Lower lobe of right lung (tissue), 2 donors: ENCODE measurements at regions of chr3 and their contacts with region 1.

Region 1: GRCh38 chr3:114389156-114389555 is 95.3 kb downstream of the TIGIT start:
- DNase-seq: no peak
- ATAC-seq: no peak
- H3K4me3 ChIP-seq: no peak overlapping the region
- H3K27ac ChIP-seq: no peak overlapping the region
- H3K4me1 ChIP-seq: peaks cover 10% of the 10 kb centered on the region
- H3K27me3 ChIP-seq: no peaks in the 10 kb centered on the region
- CTCF ChIP-seq: no peak

Region 2: GRCh38 chr3:113783980-113784379 is 605.2 kb before region 1 on chr3:
- intact Hi-C with region 1: no loop called
- DNase-seq: no peak
- ATAC-seq: no peak
- H3K4me3 ChIP-seq: no peak overlapping the region
- H3K27ac ChIP-seq: peak overlapping the region; percentile 2
- H3K4me1 ChIP-seq: peaks cover 18% of the 10 kb centered on the region
- H3K27me3 ChIP-seq: no peaks in the 10 kb centered on the region
- CTCF ChIP-seq: no peak

Region 3: DNA sequence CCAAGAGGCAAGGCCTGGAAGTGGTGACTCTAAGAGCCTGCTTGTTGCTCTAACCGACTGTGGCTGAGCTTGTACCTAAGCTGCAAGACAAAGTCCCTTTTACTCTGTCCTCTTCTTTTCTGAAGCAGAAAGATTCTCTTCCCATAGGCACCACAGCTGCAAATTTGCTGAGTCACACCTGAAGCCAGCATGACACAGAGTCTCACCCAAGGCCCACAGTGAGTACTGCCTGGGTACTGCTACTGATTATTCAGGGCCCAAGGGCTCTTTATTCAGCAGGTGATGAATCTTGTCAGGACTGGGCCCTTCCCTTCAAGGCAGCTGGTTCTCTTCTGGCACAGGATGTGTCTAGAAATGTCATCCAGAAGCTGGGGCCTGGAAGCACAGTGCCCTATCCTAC is 114.2 kb before region 1 on chr3:
- intact Hi-C with region 1: no loop called
- DNase-seq: no peak
- ATAC-seq: no peak
- H3K4me3 ChIP-seq: no peak overlapping the region
- H3K27ac ChIP-seq: no peak overlapping the region
- H3K4me1 ChIP-seq: no peaks in the 10 kb centered on the region
- H3K27me3 ChIP-seq: no peaks in the 10 kb centered on the region
- CTCF ChIP-seq: no peak

Region 4: DNA sequence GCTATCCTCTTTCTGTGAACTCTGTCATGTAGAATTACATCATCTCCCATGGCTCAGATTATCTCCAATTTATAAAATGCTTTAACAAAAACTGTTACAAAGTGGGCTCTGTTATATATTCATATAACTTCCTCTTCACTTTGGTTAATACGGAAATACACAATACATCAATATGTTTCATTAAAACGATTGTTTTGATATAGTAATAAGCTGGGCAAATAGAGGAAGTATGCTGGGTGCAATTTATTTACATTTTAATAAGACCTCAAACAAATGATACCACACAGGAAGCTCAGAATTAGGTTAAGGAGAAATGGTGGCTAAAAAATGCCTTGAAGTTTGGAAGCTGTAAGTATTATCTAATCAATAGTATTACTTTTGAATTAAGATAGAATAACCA is 426.9 kb after region 1 on chr3:
- intact Hi-C with region 1: loop called (anchors 5 kb)
- DNase-seq: no peak
- ATAC-seq: no peak
- H3K4me3 ChIP-seq: no peak overlapping the region
- H3K27ac ChIP-seq: no peak overlapping the region
- H3K4me1 ChIP-seq: no peaks in the 10 kb centered on the region
- H3K27me3 ChIP-seq: no peaks in the 10 kb centered on the region
- CTCF ChIP-seq: no peak